Testis (tissue), 5 donors: ENCODE measurements at regions of chr1 and their contacts with region 1.

Region 1: DNA sequence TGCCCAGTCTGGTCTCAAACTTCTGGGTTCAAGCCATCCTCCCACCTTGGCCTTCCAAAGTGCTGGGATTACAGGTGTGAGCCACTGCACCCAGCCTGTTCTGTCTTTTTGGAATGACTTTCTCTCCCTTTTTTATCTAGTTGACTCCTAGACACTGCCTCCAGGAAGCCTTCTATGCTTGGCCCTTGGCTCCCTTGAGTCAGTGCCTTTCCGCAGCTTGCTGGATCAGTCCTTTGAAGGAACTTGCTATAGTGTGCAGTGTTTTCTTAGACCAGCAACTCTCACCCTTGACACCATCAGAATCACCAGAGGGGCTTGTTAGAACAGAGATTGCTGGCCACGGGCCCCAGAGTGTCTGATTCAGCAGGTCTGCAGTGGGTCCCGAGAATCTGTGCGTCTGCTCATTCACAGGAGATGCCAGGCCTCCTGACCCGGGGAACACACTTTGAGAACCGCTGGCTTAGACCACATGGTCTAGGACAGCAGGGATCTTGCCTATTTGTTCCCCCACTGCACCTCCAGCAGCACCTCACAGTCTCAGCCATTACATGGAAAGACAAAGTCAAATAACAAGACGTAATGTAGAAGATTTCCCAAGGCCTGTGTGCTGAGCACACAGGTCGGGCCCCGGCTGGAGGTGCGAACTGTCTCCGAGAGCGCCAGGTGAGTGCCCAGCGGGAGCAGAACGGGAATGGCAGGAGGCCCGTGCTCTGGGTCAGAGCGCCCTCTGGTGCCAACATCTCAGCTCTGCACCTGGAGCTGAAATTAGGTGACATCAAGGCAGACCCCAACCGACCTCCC is 27.4 kb upstream of the CTPS1 start:
- DNase-seq: peak; percentile 84
- H3K4me3 ChIP-seq: no peak overlapping the region
- H3K27ac ChIP-seq: no peak overlapping the region
- H3K4me1 ChIP-seq: no peaks in the 10 kb centered on the region
- H3K27me3 ChIP-seq: no peaks in the 10 kb centered on the region
- CTCF ChIP-seq: peak; percentile 78 to 89 (median 81)
- POLR2A ChIP-seq: no peak

Region 2: GRCh38 chr1:40774266-40774998 is 177.7 kb before region 1 on chr1:
- intact Hi-C with region 1: loop called (anchors 10 kb)
- DNase-seq: peak; percentile 70
- H3K4me3 ChIP-seq: no peak overlapping the region
- H3K27ac ChIP-seq: no peak overlapping the region
- H3K4me1 ChIP-seq: no peaks in the 10 kb centered on the region
- H3K27me3 ChIP-seq: no peaks in the 10 kb centered on the region
- CTCF ChIP-seq: peak in 2 of 3 experiments; percentile 56 to 79
- POLR2A ChIP-seq: no peak

Region 3: GRCh38 chr1:40849801-40850592 is 102.1 kb before region 1 on chr1:
- intact Hi-C with region 1: loop called (anchors 5 kb)
- DNase-seq: peak; percentile 83
- H3K4me3 ChIP-seq: no peak overlapping the region
- H3K27ac ChIP-seq: no peak overlapping the region
- H3K4me1 ChIP-seq: peaks cover 3% of the 10 kb centered on the region
- H3K27me3 ChIP-seq: no peaks in the 10 kb centered on the region
- CTCF ChIP-seq: peak; percentile 70 to 94 (median 88)
- POLR2A ChIP-seq: no peak